K562 (cell line): ENCODE measurements at regions of chr12 and their contacts with region 1.

Region 1: GRCh38 chr12:125065021-125065795 is at the start of gene AACS:
- DNase-seq: peak; percentile 80 to 97 (median 96)
- ATAC-seq: peak; percentile 98
- H3K4me3 ChIP-seq: peak within 1 kb of the TSS; percentile 68
- H3K27ac ChIP-seq: no peak within 1 kb of the TSS; the same call in 1 of the 3 replicates
- H3K4me1 ChIP-seq: peaks cover 0 to 15% of the 10 kb centered on the region in 2 experiments; a peak in 3 of 5 replicates
- H3K27me3 ChIP-seq: 0 out of 5 replicates have a peak, but pooled peaks cover 0 to 4% of the 10 kb centered on the region in 2 experiments
- CTCF ChIP-seq: peak in 2 of 3 experiments; percentile 6 to 11; a peak in 2 of 6 replicates
- EP300 ChIP-seq: no peak
- POLR2A ChIP-seq: peak; percentile 58; the same call in 1 of the 2 replicates
- RAD21 ChIP-seq: no peak
- polyA plus RNA-seq, gene AACS: 2.4 TPM

Region 2: DNA sequence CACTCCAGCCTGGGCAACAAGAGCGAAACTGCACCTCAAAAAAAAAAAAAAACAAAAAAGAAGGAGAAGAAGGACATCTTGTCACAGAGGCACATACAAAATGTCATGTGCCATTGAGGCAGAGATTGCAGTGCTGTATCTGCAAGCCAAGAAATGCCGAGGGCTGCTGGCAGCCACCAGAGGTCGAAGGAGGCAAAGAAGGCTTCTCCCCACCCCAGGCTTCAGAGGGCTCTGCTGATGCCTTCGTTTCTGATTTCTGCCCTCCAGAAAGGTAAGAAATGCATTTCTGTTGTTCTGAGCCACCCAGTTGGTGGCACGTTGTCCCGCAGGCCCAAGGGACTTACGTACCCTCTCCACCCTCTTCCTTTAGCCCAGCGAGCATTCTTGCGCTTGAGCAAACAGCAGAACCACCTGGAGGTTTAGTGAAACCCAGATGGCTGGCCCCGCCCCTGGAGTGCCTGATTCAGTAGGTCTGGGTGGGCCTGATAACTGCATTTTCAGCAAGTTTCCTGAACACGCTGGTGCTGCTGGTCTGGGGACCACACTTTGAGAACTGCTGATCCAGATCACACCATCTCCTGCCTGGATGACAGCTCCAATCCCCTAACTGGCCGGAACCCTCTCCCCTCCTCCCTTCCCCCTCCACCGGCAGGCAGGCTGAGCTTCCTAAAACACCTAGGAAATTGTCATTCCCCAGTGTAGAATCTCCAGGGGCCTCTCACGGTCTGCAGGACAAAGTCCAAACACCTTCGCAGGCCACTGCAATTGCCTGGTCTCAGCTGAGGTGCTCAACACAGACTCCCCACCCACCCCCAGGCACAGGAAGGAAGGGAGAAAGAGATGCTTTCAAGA is 180.4 kb before region 1 on chr12:
- CTCF ChIA-PET with region 1: no interaction called
- POLR2A ChIA-PET with region 1: no interaction called
- in situ Hi-C with region 1: no loop called
- intact Hi-C with region 1: no loop called
- DNase-seq: peak; percentile 77 to 98 (median 82)
- ATAC-seq: peak; percentile 87
- H3K4me3 ChIP-seq: no peak overlapping the region
- H3K27ac ChIP-seq: peak overlapping the region; percentile 57; the same call in 2 of the 3 replicates
- H3K4me1 ChIP-seq: peaks cover 36 to 55% of the 10 kb centered on the region in 2 experiments
- H3K27me3 ChIP-seq: no peaks in the 10 kb centered on the region
- CTCF ChIP-seq: peak in 2 of 3 experiments; percentile 25 to 28; a peak in 2 of 6 replicates
- EP300 ChIP-seq: peak; percentile 85
- POLR2A ChIP-seq: no peak
- RAD21 ChIP-seq: no peak

Region 3: GRCh38 chr12:125049093-125049458 is 16.1 kb before region 1 on chr12:
- CTCF ChIA-PET with region 1: no interaction called
- POLR2A ChIA-PET with region 1: interaction called, 5 read pairs
- in situ Hi-C with region 1: no loop called
- intact Hi-C with region 1: loop called (anchors 2 kb)
- DNase-seq: no peak
- ATAC-seq: peak; percentile 40
- H3K4me3 ChIP-seq: peak overlapping the region; percentile 32
- H3K27ac ChIP-seq: peak overlapping the region; percentile 11; the same call in 2 of the 3 replicates
- H3K4me1 ChIP-seq: peaks cover 2 to 9% of the 10 kb centered on the region in 2 experiments; a peak in 4 of 5 replicates
- H3K27me3 ChIP-seq: peaks cover 0 to 12% of the 10 kb centered on the region in 2 experiments; a peak in 3 of 5 replicates
- CTCF ChIP-seq: no peak
- EP300 ChIP-seq: no peak
- POLR2A ChIP-seq: no peak
- RAD21 ChIP-seq: no peak